ENCODE measurements at regions of chr3 and their contacts with region 1.

Region 1: GRCh38 chr3:159260049-159260662 is 458.3 kb downstream of the MFSD1 start:
- DNase-seq: peak in 1 of 3 donors; percentile 68
- ATAC-seq: peak; percentile 36
- H3K4me3 ChIP-seq: no peak overlapping the region
- H3K4me1 ChIP-seq: no peaks in the 10 kb centered on the region
- CTCF ChIP-seq: peak; percentile 30

Region 2: DNA sequence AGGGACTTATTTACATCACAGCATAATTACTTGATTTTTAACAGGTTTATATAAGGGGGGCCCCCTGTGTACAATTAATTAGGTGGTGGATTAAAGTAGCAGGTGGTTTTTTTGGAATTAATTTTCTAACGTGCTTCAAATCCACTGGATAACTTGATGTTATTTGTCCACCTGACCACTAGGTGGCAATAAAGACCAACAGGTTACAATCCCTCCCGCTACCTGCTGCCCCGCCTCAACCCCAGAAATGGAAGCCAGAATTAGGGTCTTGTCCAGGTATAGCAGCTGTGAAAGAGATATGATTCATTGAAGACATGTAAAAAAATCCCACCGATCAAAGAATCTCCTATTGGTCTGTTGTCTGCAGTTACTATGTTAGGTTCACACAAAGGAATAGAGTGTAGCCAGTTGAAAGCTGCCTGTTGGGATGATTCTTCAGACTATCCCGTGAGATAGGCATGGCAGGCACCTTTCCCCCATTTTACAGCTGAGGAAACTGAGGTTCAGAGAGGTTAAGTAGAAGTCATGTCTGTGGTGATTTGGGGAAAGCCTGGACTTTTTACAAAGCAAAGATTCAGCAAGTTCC is 414.3 kb before region 1 on chr3:
- intact Hi-C with region 1: loop called (anchors 5 kb)
- DNase-seq: peak in 1 of 3 donors; percentile 33
- ATAC-seq: peak; percentile 63
- H3K4me3 ChIP-seq: no peak overlapping the region
- H3K4me1 ChIP-seq: no peaks in the 10 kb centered on the region
- CTCF ChIP-seq: peak; percentile 22

Region 3: DNA sequence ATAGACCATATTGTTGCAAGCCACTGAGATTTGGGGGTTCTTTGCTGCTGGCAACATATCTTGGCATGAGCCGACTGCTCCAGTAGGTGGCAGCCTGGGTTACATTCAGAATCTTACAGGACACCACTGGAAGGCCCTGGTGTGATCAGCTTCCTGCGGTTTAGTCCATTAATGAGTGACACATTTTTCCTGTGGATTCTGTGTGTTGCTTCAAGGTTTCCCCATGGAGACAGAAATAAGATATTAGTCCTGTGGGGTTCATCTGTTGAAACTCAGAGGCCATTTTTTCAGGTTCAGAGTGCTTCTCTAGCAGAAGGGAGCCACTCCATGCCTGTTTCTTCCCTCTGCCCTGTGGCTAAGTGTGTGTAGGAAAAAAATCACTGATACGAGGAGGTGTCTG is 342.1 kb before region 1 on chr3:
- intact Hi-C with region 1: loop called in 1 of 2 experiments (anchors 10 kb)
- DNase-seq: peak in 2 of 3 donors; percentile 46 to 63
- ATAC-seq: peak; percentile 68
- H3K4me3 ChIP-seq: no peak overlapping the region
- H3K4me1 ChIP-seq: no peaks in the 10 kb centered on the region
- CTCF ChIP-seq: no peak

Region 4: DNA sequence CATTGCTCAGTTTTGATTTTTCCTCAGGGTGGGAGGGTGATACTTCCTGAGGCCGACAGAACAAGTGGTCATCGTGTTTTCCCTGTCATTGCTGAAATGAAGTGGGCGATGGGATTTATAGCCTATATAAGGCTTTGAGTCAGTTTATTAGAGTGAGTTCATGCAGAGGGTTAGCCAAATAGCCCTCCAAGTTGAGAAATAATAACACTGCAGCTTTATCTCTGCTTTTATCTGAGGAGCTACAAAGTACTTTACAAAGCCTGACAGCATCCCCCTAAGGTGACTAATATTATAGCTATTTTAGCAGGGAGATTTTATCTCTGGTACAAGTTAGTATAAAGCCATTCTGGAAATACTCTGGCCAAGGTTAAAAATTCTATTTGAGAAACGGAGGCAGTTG is 68.7 kb before region 1 on chr3:
- intact Hi-C with region 1: no loop called
- DNase-seq: no peak
- ATAC-seq: no peak
- H3K4me3 ChIP-seq: no peak overlapping the region
- H3K4me1 ChIP-seq: no peaks in the 10 kb centered on the region
- CTCF ChIP-seq: no peak

Region 5: DNA sequence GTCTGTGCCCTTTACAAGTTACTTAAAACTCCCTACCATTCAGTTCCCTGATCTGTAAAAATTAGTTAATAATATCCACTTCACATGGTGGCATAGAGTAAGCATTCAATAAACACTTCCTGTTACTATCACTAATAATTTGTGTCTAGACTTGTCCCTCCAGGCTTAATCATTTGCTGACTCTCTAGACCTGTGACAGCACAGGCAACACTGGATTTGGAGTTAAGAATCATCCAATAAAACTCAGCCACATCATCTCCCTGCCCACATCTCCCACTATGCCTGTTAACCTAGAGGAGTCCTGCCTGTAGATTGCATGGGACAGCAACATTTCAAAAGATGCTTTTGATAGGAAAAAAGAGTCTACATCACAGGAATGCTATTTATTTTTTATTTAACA is 106.3 kb after region 1 on chr3:
- intact Hi-C with region 1: no loop called
- DNase-seq: no peak
- ATAC-seq: no peak
- H3K4me3 ChIP-seq: no peak overlapping the region
- H3K4me1 ChIP-seq: no peaks in the 10 kb centered on the region
- CTCF ChIP-seq: no peak

Region 6: GRCh38 chr3:159804726-159805410 is 544.7 kb after region 1 on chr3:
- intact Hi-C with region 1: loop called in 1 of 2 experiments (anchors 5 kb)
- DNase-seq: peak in 2 of 3 donors; percentile 47 to 79
- ATAC-seq: peak; percentile 97
- H3K4me3 ChIP-seq: no peak overlapping the region
- H3K4me1 ChIP-seq: no peaks in the 10 kb centered on the region
- CTCF ChIP-seq: peak; percentile 65